ENCODE measurements at regions of chr1 and their contacts with region 1.

Region 1: DNA sequence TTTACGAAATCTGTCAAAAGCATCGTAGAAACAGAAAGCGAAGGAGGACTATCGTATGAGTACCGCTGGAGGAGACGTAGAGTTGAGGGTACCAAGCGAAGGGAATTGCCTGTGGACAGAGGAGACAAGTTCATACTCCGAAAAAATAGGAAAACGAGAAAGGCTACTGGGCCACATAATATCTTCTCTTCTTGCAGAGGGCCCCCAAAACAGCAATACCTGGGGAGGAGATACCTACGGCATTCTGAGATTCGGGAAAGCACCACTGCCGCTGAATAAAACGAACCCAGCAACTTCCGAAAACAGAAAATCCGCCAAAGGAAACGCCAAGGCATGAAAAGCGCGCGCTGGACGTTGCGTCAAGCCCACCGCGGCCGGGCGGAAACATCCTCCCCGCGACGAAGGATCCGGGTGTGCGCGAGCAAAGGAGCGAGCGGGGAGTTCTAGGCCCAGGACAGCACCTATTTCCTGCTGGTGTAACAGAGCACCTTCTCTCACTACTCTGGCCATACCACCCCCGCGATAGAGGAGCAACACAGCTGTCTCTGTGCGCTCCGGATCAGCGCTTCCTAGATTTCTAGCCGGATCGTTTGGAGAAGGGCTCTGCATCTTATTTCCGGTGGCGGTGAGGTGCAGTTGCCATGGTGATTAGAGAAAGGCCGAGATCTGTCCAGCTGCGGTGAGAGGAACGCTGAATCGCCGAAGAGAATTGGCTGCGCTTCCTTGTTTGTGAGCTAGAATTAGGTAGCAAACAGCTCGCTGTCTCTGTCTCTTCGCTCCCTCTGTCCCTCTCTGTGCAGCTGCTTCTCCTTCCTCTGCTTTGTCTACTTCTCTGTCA is at the starts of genes EFCAB7 and ITGB3BP:
- DNase-seq: peak; percentile 95
- H3K4me3 Mint-ChIP-seq: peak within 1 kb of the TSS; percentile 93
- H3K27ac Mint-ChIP-seq: peak within 1 kb of the TSS; percentile 94
- H3K4me1 Mint-ChIP-seq: peaks cover 26% of the 10 kb centered on the region
- H3K27me3 Mint-ChIP-seq: no peaks in the 10 kb centered on the region
- CTCF ChIP-seq: no peak
- total RNA-seq, gene EFCAB7: 7.6 and 7.9 TPM in 2 replicates
- total RNA-seq, gene ITGB3BP: 31.4 and 31.8 TPM in 2 replicates

Region 2: GRCh38 chr1:63327417-63328139 is 195.5 kb before region 1 on chr1:
- CTCF ChIA-PET with region 1: interaction called, 3 read pairs
- POLR2A ChIA-PET with region 1: no interaction called
- intact Hi-C with region 1: loop called (anchors 5 kb)
- DNase-seq: peak; percentile 66
- H3K4me3 Mint-ChIP-seq: no peak overlapping the region
- H3K27ac Mint-ChIP-seq: no peak overlapping the region
- H3K4me1 Mint-ChIP-seq: no peaks in the 10 kb centered on the region
- H3K27me3 Mint-ChIP-seq: peaks cover 21% of the 10 kb centered on the region
- CTCF ChIP-seq: peak; percentile 74

Region 3: DNA sequence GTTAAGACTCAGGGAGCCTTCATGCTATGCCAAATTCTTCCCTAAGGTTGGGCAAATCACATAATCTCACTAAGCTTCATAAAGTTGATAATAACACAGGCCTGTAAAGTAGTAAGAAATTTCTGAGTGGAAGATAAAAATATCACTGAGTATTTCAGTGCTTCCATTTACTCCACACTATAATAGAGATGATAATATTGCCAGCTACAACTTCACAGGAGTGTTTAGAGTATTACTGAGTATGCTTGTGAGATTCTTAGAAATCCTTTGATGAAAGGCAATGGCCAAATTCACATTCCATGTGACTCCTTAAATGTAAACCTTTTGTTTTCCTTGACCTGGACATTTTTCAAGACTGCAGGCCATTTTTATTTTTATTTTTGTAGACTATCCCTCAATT is 10.5 kb before region 1 on chr1:
- CTCF ChIA-PET with region 1: no interaction called
- POLR2A ChIA-PET with region 1: interaction called, 10 read pairs
- intact Hi-C with region 1: no loop called
- DNase-seq: no peak
- H3K4me3 Mint-ChIP-seq: no peak overlapping the region
- H3K27ac Mint-ChIP-seq: no peak overlapping the region
- H3K4me1 Mint-ChIP-seq: peaks cover 5% of the 10 kb centered on the region
- H3K27me3 Mint-ChIP-seq: no peaks in the 10 kb centered on the region
- CTCF ChIP-seq: no peak

Region 4: GRCh38 chr1:63547621-63548294 is 24.6 kb after region 1 on chr1:
- CTCF ChIA-PET with region 1: interaction called, 6 read pairs
- POLR2A ChIA-PET with region 1: interaction called, 43 read pairs
- intact Hi-C with region 1: no loop called
- DNase-seq: peak; percentile 78
- H3K4me3 Mint-ChIP-seq: peak overlapping the region; percentile 53
- H3K27ac Mint-ChIP-seq: peak overlapping the region; percentile 93
- H3K4me1 Mint-ChIP-seq: peaks cover 17% of the 10 kb centered on the region
- H3K27me3 Mint-ChIP-seq: no peaks in the 10 kb centered on the region
- CTCF ChIP-seq: no peak

Measured in MCF 10A (cell line).